ENCODE measurements at regions of chr6 and their contacts with region 1.

Region 1: GRCh38 chr6:150346346-150346745 is 22.5 kb upstream of the IYD start:
- DNase-seq: peak; percentile 68
- H3K4me3 ChIP-seq: no peak overlapping the region
- H3K27ac ChIP-seq: no peak overlapping the region
- H3K4me1 ChIP-seq: peaks cover 18% of the 10 kb centered on the region
- H3K27me3 ChIP-seq: no peaks in the 10 kb centered on the region
- CTCF ChIP-seq: no peak

Region 2: DNA sequence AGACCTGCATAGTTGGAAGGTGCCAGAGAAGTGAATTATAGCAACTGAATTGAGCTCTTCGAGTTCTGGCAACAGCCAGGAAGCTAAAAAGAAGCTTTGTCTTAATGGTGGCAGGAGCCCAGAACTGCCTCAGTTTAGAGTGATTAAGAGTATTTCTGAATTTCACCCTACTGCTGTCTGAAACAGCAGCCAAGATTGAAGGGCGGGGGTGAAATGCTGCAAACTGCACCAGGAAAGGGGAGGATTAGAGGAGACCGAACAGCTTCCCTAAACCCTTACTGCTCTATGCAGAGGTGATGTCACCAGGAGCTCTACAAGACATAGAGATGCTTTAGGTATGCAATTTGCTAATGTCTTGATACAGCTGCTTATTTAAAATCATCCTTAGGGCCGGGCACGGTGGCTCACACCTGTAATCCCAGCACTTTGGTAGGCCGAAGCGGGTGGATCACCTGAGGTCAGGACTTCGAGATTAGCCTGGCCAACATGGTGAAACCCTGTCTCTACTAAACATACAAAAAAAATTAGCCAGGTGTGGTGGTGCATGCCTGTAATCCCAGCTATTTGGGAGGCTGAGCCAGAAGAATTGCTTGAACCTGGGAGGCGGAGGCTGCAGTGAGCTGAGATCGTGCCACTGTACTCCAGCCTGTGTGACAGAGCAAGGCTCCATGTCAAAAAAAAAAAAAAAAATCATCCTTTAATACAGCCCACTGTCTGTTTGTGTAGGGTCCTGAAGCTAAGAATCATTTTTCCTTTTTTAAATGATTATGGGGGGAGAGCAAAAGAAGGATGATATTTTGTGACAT is 69.2 kb before region 1 on chr6:
- CTCF ChIA-PET with region 1: no interaction called
- dilution Hi-C with region 1: no loop called
- in situ Hi-C with region 1: no loop called
- intact Hi-C with region 1: no loop called
- DNase-seq: no peak
- H3K4me3 ChIP-seq: no peak overlapping the region
- H3K27ac ChIP-seq: no peak overlapping the region
- H3K4me1 ChIP-seq: peaks cover 39% of the 10 kb centered on the region
- H3K27me3 ChIP-seq: no peaks in the 10 kb centered on the region
- CTCF ChIP-seq: no peak

Region 3: GRCh38 chr6:150380256-150380655 is 33.9 kb after region 1 on chr6:
- CTCF ChIA-PET with region 1: no interaction called
- dilution Hi-C with region 1: loop called (anchors 5 kb)
- in situ Hi-C with region 1: no loop called
- intact Hi-C with region 1: no loop called
- DNase-seq: no peak
- H3K4me3 ChIP-seq: no peak overlapping the region
- H3K27ac ChIP-seq: no peak overlapping the region
- H3K4me1 ChIP-seq: peaks cover 3% of the 10 kb centered on the region
- H3K27me3 ChIP-seq: no peaks in the 10 kb centered on the region
- CTCF ChIP-seq: no peak

Measured in mammary epithelial cell (primary cell).